AG04449 (cell line): ENCODE measurements at regions of chr6 and their contacts with region 1.

Region 1: GRCh38 chr6:87322304-87323212 is at the start of gene SMIM8:
- DNase-seq: no peak
- H3K4me3 ChIP-seq: peak within 1 kb of the TSS; percentile 93
- CTCF ChIP-seq: peak; percentile 97

Region 2: DNA sequence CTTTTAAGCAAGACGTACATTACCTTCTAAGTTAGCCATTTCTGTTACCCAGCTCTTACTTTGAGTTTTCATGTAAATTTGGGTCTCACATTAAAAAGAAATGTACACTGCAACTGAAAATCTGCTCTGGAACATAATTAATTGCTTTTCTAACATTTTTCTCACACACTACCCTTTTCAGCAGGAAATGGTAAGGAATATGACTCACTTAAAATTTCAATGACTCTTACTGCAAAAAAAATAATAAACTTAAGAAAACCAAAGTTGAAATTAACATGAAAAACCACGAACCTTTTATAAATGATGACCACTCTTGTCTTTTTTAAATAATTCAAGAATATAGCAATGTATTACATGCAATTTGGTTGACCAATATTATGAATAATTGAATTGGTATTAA is 228.9 kb before region 1 on chr6:
- CTCF ChIA-PET with region 1: no interaction called
- POLR2A ChIA-PET with region 1: no interaction called
- DNase-seq: no peak
- H3K4me3 ChIP-seq: no peak overlapping the region
- CTCF ChIP-seq: no peak

Region 3: DNA sequence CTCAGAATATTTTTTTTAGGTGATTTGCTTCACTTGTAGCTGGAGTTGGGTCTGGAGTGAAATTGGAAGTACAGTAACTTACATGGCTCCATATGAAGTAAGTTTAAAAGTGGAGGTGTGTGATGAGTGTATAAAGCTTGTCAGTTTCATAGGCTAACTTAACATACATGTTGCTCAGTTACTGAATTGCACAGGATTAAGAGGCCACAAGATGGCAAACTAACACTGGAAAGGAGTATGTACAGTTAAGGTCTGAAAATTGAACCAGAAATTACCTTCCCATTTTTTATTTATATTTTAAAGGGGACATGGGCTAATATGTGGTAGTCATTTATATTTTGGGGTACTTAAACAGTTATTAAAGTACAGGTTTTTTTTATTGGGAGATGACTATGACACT is 45.4 kb before region 1 on chr6:
- CTCF ChIA-PET with region 1: interaction called, 12 read pairs
- POLR2A ChIA-PET with region 1: no interaction called
- DNase-seq: no peak
- H3K4me3 ChIP-seq: no peak overlapping the region
- CTCF ChIP-seq: peak; percentile 19

Region 4: DNA sequence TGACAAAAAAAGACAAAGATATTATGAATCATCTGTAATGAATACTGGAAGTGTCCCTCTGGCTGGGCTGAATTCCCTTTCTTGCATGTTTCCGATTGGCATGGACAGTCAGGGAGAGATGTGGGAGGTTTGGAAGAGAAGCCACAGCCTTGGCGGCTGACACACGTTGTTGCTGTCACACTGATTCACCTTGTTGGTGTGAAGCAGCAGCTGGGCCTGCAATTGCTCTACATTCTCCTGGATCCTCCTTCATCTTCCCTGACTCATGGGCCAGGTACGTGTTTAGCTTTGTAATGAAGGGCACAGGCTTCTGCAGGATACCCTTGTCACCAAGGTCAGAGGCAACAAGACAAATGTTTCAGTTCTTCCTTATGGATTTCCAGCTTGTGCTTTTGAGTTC is 13.6 kb before region 1 on chr6:
- CTCF ChIA-PET with region 1: interaction called, 31 read pairs
- POLR2A ChIA-PET with region 1: no interaction called
- DNase-seq: no peak
- H3K4me3 ChIP-seq: no peak overlapping the region
- CTCF ChIP-seq: no peak

Region 5: DNA sequence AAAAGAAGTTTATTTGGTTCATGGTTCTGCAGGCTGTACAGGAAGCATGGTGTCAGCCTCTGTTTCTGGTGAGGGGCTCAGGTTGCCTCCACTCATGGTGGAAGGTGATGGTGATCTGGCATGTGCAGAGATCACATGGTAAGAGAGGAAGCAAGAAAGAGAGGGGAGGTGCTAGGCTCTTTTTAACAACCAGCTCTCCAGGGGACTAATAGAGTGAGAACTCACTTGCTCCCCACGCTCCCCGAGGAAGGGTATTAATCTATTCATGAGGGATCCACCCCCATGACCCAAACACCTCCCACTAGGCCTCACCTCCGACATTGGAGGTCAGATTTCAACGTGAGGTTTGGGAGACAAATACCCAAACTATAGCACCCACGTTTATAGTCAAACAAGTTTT is 10.5 kb after region 1 on chr6:
- CTCF ChIA-PET with region 1: interaction called, 14 read pairs
- POLR2A ChIA-PET with region 1: no interaction called
- DNase-seq: no peak
- H3K4me3 ChIP-seq: no peak overlapping the region
- CTCF ChIP-seq: no peak

Region 6: DNA sequence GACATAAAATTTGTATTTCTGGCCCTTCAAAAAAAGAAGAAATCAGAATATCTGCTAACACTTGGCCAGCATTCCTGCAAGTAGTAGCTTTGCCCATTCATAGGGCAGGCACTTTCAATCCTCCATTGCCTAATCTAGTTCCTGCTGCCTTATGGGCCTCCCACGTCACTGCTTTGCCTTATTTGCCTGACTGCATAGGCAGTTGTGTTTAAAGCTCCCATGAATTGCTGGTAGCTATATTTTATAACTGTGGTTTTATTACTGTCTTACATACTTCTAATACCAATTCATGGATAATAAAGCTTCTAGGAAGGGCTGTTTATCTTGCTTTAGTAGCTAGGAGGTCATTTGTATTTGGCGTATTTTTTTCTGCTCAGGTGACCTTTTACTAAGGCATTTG is 142.5 kb after region 1 on chr6:
- CTCF ChIA-PET with region 1: no interaction called
- POLR2A ChIA-PET with region 1: no interaction called
- DNase-seq: no peak
- H3K4me3 ChIP-seq: no peak overlapping the region
- CTCF ChIP-seq: no peak

Region 7: GRCh38 chr6:87756858-87757257 is 434.3 kb after region 1 on chr6:
- CTCF ChIA-PET with region 1: no interaction called
- POLR2A ChIA-PET with region 1: no interaction called
- DNase-seq: peak; percentile 38
- H3K4me3 ChIP-seq: no peak overlapping the region
- CTCF ChIP-seq: no peak